Spleen (tissue), 13 donors: ENCODE measurements at regions of chr10 and their contacts with region 1.

Region 1: GRCh38 chr10:96642973-96643372 is 56.2 kb upstream of the TM9SF3 start:
- DNase-seq: peak; percentile 94
- H3K4me3 ChIP-seq: no peak overlapping the region
- H3K27ac ChIP-seq: peak overlapping the region in 3 of 8 donors; percentile 18 to 86 (median 31)
- H3K4me1 ChIP-seq: peaks cover 0 to 82% (median 38%) of the 10 kb centered on the region in 6 donors
- H3K27me3 ChIP-seq: no peaks in the 10 kb centered on the region
- CTCF ChIP-seq: peak; percentile 49 to 83 (median 79)
- POLR2A ChIP-seq: no peak

Region 2: DNA sequence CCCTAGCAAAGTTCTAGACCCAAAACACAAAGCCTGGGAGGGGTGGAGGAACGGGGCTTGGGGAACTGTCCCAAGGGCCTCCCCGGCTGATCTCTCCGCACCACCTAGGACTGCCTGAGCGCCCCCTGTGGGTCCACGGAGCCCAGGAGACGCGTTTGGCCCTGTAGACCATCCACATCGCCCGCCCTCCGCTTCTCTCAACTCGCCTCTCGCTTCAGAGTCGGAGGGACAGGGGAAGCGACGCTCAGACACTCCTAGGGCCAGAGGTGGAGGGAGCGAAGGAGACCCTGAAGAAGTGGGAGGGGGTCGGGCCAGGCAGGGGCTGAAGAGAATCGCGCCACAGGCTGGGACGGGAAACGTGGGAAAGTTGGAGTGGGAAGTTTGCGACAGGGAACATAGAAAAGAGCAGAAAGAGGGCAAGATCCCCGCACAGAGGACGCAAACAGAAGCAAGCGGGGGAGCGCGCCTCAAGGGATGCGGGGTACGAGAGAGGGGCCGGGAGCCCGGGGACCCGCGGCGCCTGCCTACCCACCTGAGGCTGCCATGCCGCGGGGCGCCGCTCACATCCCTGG is 77.0 kb after region 1 on chr10:
- intact Hi-C with region 1: loop called (anchors 10 kb)
- DNase-seq: peak; percentile 96
- H3K4me3 ChIP-seq: peak overlapping the region; percentile 51 to 81 (median 69)
- H3K27ac ChIP-seq: peak overlapping the region; percentile 63 to 97 (median 92)
- H3K4me1 ChIP-seq: peaks cover 26 to 73% (median 57%) of the 10 kb centered on the region in 6 donors
- H3K27me3 ChIP-seq: peaks cover 0 to 4% (median 0%) of the 10 kb centered on the region in 7 donors
- CTCF ChIP-seq: peak; percentile 39 to 83 (median 72)
- POLR2A ChIP-seq: no peak

Region 3: DNA sequence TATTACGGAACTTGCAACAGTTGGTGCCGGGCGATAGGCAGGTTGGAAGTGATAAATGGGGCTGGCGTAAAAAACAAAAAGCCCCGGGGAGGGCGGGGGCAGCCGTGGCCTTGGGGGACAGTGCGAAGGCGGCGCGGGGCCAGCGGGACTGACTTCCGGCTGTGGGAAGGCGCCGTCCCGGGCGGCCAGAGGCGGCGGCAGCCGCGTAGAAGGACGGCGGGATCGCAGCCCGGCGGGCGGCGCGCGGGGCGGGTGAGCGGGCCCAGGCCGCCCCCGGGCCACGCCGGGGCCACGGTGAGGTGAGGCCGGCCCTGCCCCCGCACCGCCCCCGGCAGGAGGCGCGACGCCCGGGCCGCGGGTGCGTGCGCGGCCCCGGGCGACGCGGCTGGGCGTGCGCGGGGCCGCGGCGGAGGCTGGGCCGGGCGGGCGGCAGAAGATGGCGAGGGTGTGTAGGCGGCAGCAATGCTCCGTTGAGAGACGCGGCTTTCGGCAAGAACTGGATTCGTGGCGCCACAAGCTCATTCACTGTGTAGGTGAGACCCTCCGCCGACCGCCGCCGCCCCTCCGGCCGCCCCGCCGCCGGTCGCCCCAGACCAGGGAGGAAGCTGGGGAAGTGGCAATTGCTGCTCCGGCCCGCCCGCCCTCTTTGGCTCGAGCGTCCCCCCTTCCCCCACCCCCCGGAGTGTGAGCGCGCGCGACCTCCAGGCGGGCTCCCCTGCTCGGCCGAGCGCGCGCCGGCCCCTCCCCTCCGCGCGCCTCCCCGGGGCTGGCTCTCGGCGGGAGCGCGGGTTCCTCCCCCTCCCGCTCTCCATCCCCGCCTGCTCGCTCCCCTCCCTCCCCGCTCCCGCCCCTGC is 189.1 kb after region 1 on chr10 and contains the start of gene LCOR:
- intact Hi-C with region 1: loop called (anchors 5 kb)
- DNase-seq: peak; percentile 96
- H3K4me3 ChIP-seq: peak within 1 kb of the TSS; percentile 83 to 94 (median 88)
- H3K27ac ChIP-seq: peak within 1 kb of the TSS; percentile 94 to 98 (median 98)
- H3K4me1 ChIP-seq: peaks cover 34 to 68% (median 56%) of the 10 kb centered on the region in 6 donors
- H3K27me3 ChIP-seq: no peaks in the 10 kb centered on the region
- CTCF ChIP-seq: peak in 2 of 11 experiments; percentile 9 to 28
- POLR2A ChIP-seq: peak in 1 of 3 donors; percentile 64
- total RNA-seq, gene LCOR: 43.1 to 105 (median 51.1) TPM